A549 (cell line): ENCODE measurements at regions of chr15 and their contacts with region 1.

Region 1: DNA sequence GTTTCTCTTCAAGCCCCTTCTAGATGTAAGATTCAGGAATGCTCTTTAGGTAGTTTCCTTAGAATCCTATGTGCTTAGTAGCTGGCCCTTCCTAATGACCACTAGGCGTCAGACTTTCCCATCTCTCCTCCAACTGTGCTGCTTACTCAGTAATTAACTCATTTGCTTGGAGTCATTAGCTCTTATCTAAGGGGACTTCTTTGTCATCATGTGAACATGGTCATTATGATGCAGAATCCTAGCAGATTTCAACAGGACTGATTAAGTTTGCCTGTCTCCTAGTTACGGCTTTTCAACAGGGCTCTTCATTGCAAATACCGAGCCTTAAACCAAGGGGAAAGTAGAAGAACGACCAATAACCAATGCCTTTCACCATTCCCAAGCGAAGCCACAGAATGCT is 46.4 kb downstream of the GJD2 start:
- DNase-seq: peak; percentile 38 to 46
- ATAC-seq: peak; percentile 77 to 89
- H3K4me3 ChIP-seq: no peak overlapping the region
- H3K27ac ChIP-seq: no peak overlapping the region
- H3K4me1 ChIP-seq: peaks cover 14% of the 10 kb centered on the region; the same call in 2 of the 3 replicates
- CTCF ChIP-seq: peak; percentile 94
- EP300 ChIP-seq: no peak
- POLR2A ChIP-seq: no peak
- RAD21 ChIP-seq: peak; percentile 84 to 87

Region 2: DNA sequence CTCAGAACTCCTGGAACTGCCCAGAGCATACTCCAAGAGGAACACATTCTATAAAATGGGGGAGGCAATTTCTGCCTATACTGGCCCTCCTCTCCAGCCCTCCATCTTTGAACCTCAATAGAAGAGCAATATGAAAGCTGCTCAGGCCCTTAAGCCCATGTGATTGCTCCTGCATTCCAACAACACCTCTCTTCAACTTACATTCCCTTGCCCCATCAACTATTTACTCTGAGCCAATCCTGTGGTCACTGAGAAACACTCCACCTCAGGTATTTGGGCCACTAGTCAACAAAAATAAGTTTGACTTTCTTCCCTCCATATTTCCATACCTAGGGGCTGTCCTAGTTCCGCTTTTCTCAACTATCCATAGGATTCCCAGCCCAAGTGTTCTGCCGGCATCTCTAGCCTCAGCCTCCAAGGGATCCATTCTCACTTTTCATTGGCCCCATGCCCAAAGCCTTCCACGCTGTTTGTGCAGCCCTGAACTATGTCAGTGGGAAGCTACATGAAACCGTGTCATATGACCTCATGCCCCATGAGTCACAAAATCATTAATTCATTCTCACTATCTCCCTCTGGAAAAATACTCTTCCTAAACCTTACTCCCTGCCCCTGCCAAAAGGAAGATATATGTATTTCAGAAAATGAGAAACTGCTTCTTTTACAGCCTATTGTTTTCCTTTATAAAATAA is 15.2 kb before region 1 on chr15:
- CTCF ChIA-PET with region 1: interaction called, 18 read pairs
- POLR2A ChIA-PET with region 1: no interaction called
- DNase-seq: no peak
- ATAC-seq: no peak
- H3K4me3 ChIP-seq: no peak overlapping the region
- H3K27ac ChIP-seq: no peak overlapping the region
- H3K4me1 ChIP-seq: no peaks in the 10 kb centered on the region
- CTCF ChIP-seq: no peak
- EP300 ChIP-seq: no peak
- POLR2A ChIP-seq: no peak
- RAD21 ChIP-seq: no peak

Region 3: DNA sequence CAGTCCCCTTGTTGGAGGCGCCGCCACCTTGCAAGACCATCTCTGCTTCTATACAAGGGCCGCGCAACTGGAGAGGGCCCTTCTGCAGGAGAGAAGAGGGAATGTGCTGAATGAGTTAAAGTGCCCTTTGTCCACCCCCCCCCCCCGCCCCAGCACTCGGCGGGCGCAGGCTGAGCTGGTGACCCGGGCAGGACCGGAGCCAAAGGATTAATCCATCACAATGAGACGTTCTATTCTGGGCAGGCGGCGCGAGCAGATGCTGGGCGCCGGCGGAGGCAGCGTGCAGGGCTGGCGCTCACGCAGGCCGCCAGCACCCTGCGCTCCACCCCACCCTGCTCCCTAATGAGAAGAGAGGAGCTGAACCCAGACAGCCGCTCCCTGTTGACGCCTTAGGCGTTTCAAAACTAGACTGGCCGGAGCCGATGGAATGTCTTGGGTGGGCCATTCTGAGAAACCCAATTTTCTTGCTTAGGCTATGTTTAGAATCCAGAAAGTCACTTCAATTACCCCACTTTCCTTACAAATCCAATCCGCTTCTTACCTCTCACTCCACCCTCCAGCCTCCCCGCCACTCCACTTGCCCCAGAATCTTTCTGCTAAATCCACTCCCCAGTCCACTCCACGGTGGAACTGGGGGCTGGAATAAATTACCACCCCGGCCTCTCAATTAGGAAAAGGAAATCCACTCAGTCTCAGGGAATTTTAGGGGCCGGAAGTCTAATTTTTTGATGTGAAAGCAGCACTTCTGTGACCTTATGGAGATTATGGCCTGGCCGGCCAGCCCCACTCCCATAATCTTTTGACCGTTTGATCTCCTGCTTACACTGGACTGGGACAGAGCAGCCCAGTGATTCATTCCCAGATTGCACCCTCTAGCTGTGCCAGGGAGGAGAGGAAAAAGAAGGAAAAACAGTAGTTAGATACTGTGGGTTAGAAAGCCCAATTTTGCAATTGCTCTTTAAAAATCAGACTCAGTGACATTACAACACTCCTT is 13.7 kb after region 1 on chr15:
- CTCF ChIA-PET with region 1: interaction called, 32 read pairs
- POLR2A ChIA-PET with region 1: interaction called, 5 read pairs
- DNase-seq: peak; percentile 14 to 59
- ATAC-seq: peak; percentile 89 to 94
- H3K4me3 ChIP-seq: peak overlapping the region; percentile 31
- H3K27ac ChIP-seq: peak overlapping the region; percentile 62 to 74
- H3K4me1 ChIP-seq: peaks cover 25% of the 10 kb centered on the region
- CTCF ChIP-seq: no peak
- EP300 ChIP-seq: peak in 1 of 2 experiments; percentile 32; a peak in 1 of 5 replicates
- POLR2A ChIP-seq: no peak
- RAD21 ChIP-seq: no peak

Region 4: GRCh38 chr15:34837246-34838016 is 129.0 kb after region 1 on chr15:
- CTCF ChIA-PET with region 1: interaction called, 15 read pairs
- POLR2A ChIA-PET with region 1: no interaction called
- DNase-seq: peak; percentile 10 to 55
- ATAC-seq: peak; percentile 95 to 99
- H3K4me3 ChIP-seq: no peak overlapping the region
- H3K27ac ChIP-seq: peak overlapping the region in 1 of 2 experiments; percentile 10; a peak in 1 of 6 replicates
- H3K4me1 ChIP-seq: peaks cover 10% of the 10 kb centered on the region; the same call in 1 of the 3 replicates
- CTCF ChIP-seq: no peak
- EP300 ChIP-seq: no peak
- POLR2A ChIP-seq: no peak
- RAD21 ChIP-seq: no peak

Region 5: GRCh38 chr15:34900748-34901147 is 192.3 kb after region 1 on chr15:
- CTCF ChIA-PET with region 1: interaction called, 12 read pairs
- POLR2A ChIA-PET with region 1: no interaction called
- DNase-seq: no peak
- ATAC-seq: no peak
- H3K4me3 ChIP-seq: no peak overlapping the region
- H3K27ac ChIP-seq: no peak overlapping the region
- H3K4me1 ChIP-seq: peaks cover 6% of the 10 kb centered on the region; the same call in 1 of the 3 replicates
- CTCF ChIP-seq: no peak
- EP300 ChIP-seq: no peak
- POLR2A ChIP-seq: no peak
- RAD21 ChIP-seq: no peak

Region 6: DNA sequence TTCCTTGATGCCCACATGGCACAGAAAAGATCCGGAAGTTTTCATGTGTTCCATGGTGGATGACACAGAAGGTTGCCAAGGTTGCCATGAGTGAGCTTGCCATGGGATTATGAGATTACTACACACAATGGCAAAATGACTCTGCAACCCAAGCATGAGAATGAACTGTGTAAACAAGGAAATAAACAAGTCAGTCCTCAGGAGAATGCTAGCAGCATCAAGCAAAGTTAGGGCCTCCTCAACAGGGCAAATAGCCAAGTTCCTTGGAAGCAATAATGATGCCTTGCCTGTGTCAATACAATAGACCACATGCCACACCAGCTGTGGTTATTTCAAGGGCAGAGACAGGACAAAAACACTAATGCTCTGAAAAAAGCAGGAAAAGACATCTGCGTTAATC is 219.3 kb after region 1 on chr15:
- CTCF ChIA-PET with region 1: interaction called, 49 read pairs
- POLR2A ChIA-PET with region 1: no interaction called
- DNase-seq: peak; percentile 12 to 78
- ATAC-seq: peak; percentile 80 to 84
- H3K4me3 ChIP-seq: no peak overlapping the region
- H3K27ac ChIP-seq: no peak overlapping the region
- H3K4me1 ChIP-seq: 0 out of 3 replicates have a peak, but pooled peaks cover 4% of the 10 kb centered on the region
- CTCF ChIP-seq: no peak
- EP300 ChIP-seq: no peak
- POLR2A ChIP-seq: no peak
- RAD21 ChIP-seq: no peak